ENCODE measurements at regions of chr7 and their contacts with region 1.

Region 1: DNA sequence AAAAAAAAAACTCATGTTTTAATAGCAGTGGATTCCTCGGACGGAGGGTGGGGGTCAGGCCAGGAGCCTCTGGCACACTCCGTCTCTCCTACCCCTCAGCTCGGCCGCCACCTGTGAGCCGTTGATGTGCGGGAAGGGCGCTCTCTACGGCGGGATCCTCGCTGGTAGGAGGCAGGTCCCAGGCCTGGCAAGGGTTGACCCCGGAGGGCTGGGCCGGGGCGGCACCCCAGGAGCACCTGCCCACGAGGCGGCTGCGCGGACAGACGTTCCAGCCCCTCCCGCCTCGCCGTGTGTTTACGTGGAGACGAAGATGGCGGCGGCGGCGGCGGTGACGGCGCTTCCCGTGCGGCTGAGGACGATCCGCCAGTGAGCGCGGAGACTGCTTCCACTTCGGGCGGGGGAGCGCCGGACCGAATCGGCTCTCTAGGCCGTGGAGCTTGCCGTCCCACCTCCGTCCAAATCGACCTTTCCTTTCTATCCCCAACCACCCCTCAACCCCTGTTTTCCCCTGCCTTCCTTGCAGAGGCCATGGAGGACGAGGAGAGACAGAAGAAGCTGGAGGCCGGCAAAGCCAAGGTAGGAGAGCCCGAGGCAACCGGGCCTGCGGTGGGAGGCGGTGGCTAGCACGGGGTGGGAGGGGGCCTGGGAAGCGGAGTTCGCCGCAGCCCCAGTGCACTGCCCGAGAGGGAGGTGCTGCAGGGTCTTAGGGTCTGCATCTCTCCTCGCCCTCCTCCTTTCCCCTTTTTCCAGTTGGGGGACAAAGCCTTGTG is at the start of gene AKAP9:
- DNase-seq: peak; percentile 88 to 90 (median 89)
- H3K4me3 ChIP-seq: peak within 1 kb of the TSS; percentile 75 to 92
- H3K4me3 Mint-ChIP-seq: peak within 1 kb of the TSS; percentile 91 to 100 (median 96)
- H3K27ac ChIP-seq: peak within 1 kb of the TSS; percentile 92
- H3K27ac Mint-ChIP-seq: peak within 1 kb of the TSS; percentile 94 to 100 (median 98)
- H3K4me1 ChIP-seq: peaks cover 39% of the 10 kb centered on the region
- H3K4me1 Mint-ChIP-seq: peaks cover 22 to 59% (median 37%) of the 10 kb centered on the region in 4 donors
- H3K27me3 ChIP-seq: no peaks in the 10 kb centered on the region
- H3K27me3 Mint-ChIP-seq: peaks cover 0 to 1% of the 10 kb centered on the region in 2 donors
- total RNA-seq, gene AKAP9: 88.5 to 91.4 TPM

Region 2: GRCh38 chr7:90346336-90347125 is 1594.2 kb before region 1 on chr7 and contains the start of gene GTPBP10:
- CTCF ChIA-PET with region 1: no interaction called
- POLR2A ChIA-PET with region 1: no interaction called
- intact Hi-C with region 1: loop called (anchors 10 kb)
- DNase-seq: peak; percentile 92 to 95 (median 94)
- H3K4me3 ChIP-seq: peak within 1 kb of the TSS; percentile 71 to 92
- H3K4me3 Mint-ChIP-seq: peak within 1 kb of the TSS; percentile 92 to 99 (median 98)
- H3K27ac ChIP-seq: peak within 1 kb of the TSS; percentile 87
- H3K27ac Mint-ChIP-seq: peak within 1 kb of the TSS; percentile 98 to 100 (median 99)
- H3K4me1 ChIP-seq: peaks cover 38% of the 10 kb centered on the region
- H3K4me1 Mint-ChIP-seq: peaks cover 30 to 54% (median 44%) of the 10 kb centered on the region in 4 donors
- H3K27me3 ChIP-seq: no peaks in the 10 kb centered on the region
- H3K27me3 Mint-ChIP-seq: peaks cover 0 to 1% of the 10 kb centered on the region in 2 donors
- total RNA-seq, gene GTPBP10: 45.5 to 46.7 TPM

Region 3: GRCh38 chr7:91953618-91954017 is 12.9 kb after region 1 on chr7:
- CTCF ChIA-PET with region 1: interaction called, 21 read pairs
- POLR2A ChIA-PET with region 1: interaction called, 4 read pairs
- intact Hi-C with region 1: no loop called
- DNase-seq: no peak
- H3K4me3 ChIP-seq: no peak overlapping the region
- H3K4me3 Mint-ChIP-seq: no peak overlapping the region
- H3K27ac ChIP-seq: no peak overlapping the region
- H3K27ac Mint-ChIP-seq: peak overlapping the region in 1 of 7 donors; percentile 57
- H3K4me1 ChIP-seq: peaks cover 6% of the 10 kb centered on the region
- H3K4me1 Mint-ChIP-seq: peaks cover 28 to 59% (median 40%) of the 10 kb centered on the region in 4 donors
- H3K27me3 ChIP-seq: no peaks in the 10 kb centered on the region
- H3K27me3 Mint-ChIP-seq: no peaks in the 10 kb centered on the region

Region 4: DNA sequence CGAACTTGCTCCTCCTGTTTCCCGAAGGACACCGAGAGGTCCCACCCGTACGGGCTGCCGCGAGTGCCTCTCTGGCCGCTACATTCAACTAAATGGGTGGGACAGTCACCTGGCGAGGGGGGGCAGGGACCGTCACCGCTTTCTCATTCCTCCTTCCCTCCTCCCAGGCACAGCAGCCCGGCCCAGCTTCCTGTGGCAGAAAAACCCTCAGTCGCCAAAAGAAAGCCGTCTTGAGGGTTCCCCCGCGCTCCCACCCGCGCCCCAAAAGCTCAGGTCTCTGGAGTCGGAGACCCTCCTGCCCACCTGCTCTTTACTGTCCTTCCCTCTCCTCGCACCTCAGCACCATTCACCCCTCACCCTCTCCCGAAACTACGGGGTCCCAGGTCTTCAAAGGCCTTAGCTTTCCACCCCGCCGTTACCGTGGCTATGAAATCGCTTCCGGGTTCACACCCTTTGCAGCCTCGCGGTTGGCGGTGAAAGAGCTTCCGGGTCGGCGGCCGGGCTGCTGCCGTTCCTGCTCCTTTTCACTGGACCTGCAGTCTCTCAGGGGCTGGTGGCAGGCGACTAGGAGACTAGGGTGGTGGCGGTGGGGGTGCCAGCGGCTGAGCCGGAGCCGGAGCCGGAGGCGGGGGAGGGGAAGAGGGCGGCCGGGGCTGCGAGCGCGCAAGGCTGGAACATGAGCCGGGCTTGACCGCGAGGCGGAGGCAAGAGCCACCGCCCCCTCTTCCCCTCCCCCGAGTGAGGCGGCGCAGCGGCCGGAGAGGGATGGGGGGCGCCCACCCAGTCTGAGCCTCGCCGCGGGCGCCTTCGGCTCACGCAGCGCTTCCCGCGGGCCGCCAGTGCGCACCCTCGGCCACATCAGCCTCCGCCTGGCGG is 305.0 kb after region 1 on chr7 and contains the starts of genes ANKIB1 and KRIT1:
- CTCF ChIA-PET with region 1: no interaction called
- POLR2A ChIA-PET with region 1: interaction called, 20 read pairs
- intact Hi-C with region 1: loop called (anchors 5 kb)
- DNase-seq: peak; percentile 86 to 91 (median 88)
- H3K4me3 ChIP-seq: peak within 1 kb of the TSS; percentile 91 to 98
- H3K4me3 Mint-ChIP-seq: peak within 1 kb of the TSS; percentile 94 to 100 (median 99)
- H3K27ac ChIP-seq: peak within 1 kb of the TSS; percentile 97
- H3K27ac Mint-ChIP-seq: peak within 1 kb of the TSS; percentile 98 to 100 (median 100)
- H3K4me1 ChIP-seq: peaks cover 43% of the 10 kb centered on the region
- H3K4me1 Mint-ChIP-seq: peaks cover 26 to 49% (median 37%) of the 10 kb centered on the region in 4 donors
- H3K27me3 ChIP-seq: no peaks in the 10 kb centered on the region
- H3K27me3 Mint-ChIP-seq: no peaks in the 10 kb centered on the region
- total RNA-seq, gene ANKIB1: 77.7 to 78.5 TPM
- total RNA-seq, gene KRIT1: 66.0 to 80.7 TPM

Region 5: DNA sequence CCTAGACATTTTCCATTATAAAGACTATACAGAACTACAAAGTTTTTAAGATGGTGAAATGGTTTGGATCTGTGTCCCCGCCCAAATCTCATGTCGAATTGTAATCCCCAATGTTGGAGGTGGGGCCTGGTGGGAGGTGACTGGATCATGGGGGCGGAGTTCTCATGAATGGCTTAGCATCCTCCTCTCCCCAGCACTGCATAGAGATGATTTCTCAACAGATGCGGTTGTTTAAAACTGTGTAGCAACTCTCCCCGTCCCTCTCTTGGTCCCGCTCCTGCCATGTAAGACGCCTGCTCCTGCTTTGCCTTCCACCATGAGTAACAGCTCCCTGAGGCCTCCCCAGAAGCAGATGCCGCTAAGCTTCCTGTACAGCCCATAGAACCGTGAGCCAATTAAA is 647.8 kb after region 1 on chr7:
- CTCF ChIA-PET with region 1: no interaction called
- POLR2A ChIA-PET with region 1: no interaction called
- intact Hi-C with region 1: loop called (anchors 1 kb)
- DNase-seq: peak in 1 of 5 donors; percentile 4
- H3K4me3 ChIP-seq: peak overlapping the region; percentile 82 to 98
- H3K4me3 Mint-ChIP-seq: peak overlapping the region; percentile 87 to 98 (median 96)
- H3K27ac ChIP-seq: peak overlapping the region; percentile 91
- H3K27ac Mint-ChIP-seq: peak overlapping the region; percentile 19 to 97 (median 80)
- H3K4me1 ChIP-seq: peaks cover 58% of the 10 kb centered on the region
- H3K4me1 Mint-ChIP-seq: peaks cover 41 to 72% (median 52%) of the 10 kb centered on the region in 4 donors
- H3K27me3 ChIP-seq: no peaks in the 10 kb centered on the region
- H3K27me3 Mint-ChIP-seq: no peaks in the 10 kb centered on the region